Activated T-helper 1 cell treated with anti-CD3 and anti-CD28 coated beads, Interleukin-12 subunit alpha, Interleukin-12 subunit beta, Interleukin-2, Interleukin-4 antibody, amounts not matched to agents 30 ng/mL and 10 ng/mL and 1 ng/mL, durations not matched to agents 14 hours and 24 hours and 36 hours (primary cell): ENCODE measurements at regions of chr6 and their contacts with region 1.

Region 1: GRCh38 chr6:5143634-5144311 is 58.6 kb downstream of the PPP1R3G start:
- DNase-seq: peak; percentile 68
- H3K4me3 Mint-ChIP-seq: no peak overlapping the region
- H3K27ac Mint-ChIP-seq: no peak overlapping the region
- H3K4me1 Mint-ChIP-seq: peaks cover 10% of the 10 kb centered on the region
- H3K27me3 Mint-ChIP-seq: no peaks in the 10 kb centered on the region

Region 2: DNA sequence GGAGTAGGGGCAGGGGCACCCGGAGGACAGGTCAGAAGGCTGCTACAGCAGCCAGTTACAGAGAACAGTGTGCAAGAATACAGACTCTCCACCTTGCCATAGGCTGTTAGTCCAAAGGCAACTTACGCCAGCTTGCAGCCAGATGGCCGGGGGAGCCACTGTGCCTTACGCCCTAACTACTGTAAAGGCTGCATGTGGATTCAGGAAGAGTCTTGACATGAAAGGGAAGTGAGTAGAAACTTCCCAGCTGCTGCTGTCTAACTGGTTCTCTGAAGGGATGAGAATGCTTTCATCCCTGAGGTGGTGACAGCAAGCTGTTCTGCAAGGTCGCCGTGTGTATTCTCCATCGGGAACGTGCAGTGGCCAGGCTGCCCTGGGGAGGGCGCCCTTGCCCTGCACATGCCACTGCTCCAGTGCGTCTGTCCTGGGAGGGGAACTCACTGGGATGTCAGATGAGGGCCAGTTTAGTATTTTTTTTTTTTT is 70.8 kb after region 1 on chr6:
- intact Hi-C with region 1: loop called (anchors 5 kb)
- DNase-seq: no peak
- H3K4me3 Mint-ChIP-seq: no peak overlapping the region
- H3K27ac Mint-ChIP-seq: no peak overlapping the region
- H3K4me1 Mint-ChIP-seq: peaks cover 14% of the 10 kb centered on the region
- H3K27me3 Mint-ChIP-seq: no peaks in the 10 kb centered on the region

Region 3: DNA sequence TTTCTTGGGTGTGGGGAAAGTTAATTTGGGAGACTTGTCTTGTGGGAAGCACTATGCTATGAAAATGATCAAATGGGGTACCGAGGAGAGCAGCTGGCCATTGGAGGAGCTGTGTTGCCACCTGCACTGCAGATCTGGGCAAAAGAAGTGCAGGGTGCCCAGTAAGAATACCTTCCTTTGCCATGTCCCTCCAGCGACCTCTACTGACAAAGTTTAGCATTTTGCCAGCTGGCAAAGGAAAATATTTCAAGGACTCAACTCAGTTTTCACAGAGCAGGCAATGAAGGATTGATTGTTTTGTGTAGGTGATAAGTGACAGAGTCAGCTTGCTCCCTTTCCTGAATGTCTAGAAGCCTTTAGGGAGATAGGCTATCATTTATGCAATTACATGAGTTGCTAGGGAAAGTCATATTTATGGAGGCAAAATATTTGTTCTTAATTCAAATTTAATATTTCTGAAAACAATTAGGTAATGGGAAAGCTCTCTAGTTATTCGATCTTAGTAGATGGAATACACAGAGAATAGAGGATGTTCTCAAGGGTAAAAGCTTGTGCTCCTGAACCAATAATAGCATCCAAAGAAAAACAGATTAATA is 236.0 kb after region 1 on chr6:
- intact Hi-C with region 1: loop called (anchors 1 kb)
- DNase-seq: peak; percentile 2
- H3K4me3 Mint-ChIP-seq: no peak overlapping the region
- H3K27ac Mint-ChIP-seq: no peak overlapping the region
- H3K4me1 Mint-ChIP-seq: no peaks in the 10 kb centered on the region
- H3K27me3 Mint-ChIP-seq: no peaks in the 10 kb centered on the region